ENCODE measurements at regions of chr22 and their contacts with region 1.

Region 1: DNA sequence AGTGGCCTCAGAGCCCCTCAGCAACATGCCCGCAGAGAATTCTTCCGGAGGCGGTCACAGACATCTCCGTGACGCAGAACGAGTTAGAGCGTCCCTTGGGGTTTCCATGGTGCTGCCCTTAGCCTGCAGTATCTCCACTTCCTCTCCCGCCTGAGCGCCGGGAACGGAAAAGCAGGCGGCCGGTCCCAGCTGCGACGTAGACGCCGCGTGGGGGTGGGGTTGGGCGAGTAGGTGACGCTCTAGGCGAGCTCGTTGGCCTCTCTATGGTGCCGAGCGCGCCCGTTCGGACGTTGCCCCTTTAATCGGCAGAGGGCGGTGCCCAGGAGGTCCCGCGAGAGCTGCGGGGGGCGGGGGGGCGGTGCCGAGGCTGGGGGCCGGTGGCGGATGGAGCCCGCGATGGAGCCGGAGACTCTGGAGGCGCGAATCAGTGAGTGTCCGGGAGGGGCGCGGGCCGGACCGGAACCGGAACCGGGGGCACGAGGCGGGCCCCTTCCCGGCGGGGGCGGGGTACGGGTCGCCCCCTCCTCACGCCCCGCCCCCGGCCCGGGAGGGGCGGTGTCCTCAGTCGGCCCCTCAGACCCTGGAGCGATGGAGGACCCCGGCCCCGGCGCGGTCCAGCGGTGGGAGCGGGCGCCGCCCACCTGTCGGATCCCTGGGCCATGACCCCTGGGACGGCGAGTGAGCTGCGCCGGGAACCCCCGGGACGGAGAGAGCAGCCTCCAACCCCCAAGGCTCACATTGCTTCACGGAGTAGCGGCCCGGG is at the start of gene GGA1:
- DNase-seq: peak; percentile 95 to 96
- H3K4me3 ChIP-seq: peak within 1 kb of the TSS; percentile 60
- H3K27ac ChIP-seq: peak within 1 kb of the TSS; percentile 99
- H3K4me1 ChIP-seq: peaks cover 43% of the 10 kb centered on the region
- H3K27me3 ChIP-seq: no peaks in the 10 kb centered on the region
- CTCF ChIP-seq: no peak
- total RNA-seq, gene GGA1: 99.2 and 102 TPM in 2 replicates

Region 2: GRCh38 chr22:37316875-37317371 is 291.7 kb before region 1 on chr22:
- CTCF ChIA-PET with region 1: interaction called, 18 read pairs
- POLR2A ChIA-PET with region 1: no interaction called
- intact Hi-C with region 1: no loop called
- DNase-seq: peak; percentile 90
- H3K4me3 ChIP-seq: no peak overlapping the region
- H3K27ac ChIP-seq: no peak overlapping the region
- H3K4me1 ChIP-seq: peaks cover 51% of the 10 kb centered on the region
- H3K27me3 ChIP-seq: no peaks in the 10 kb centered on the region
- CTCF ChIP-seq: peak; percentile 99

Region 3: GRCh38 chr22:37588546-37589215 is 20.0 kb before region 1 on chr22:
- CTCF ChIA-PET with region 1: interaction called, 15 read pairs
- POLR2A ChIA-PET with region 1: interaction called, 47 read pairs
- intact Hi-C with region 1: no loop called
- DNase-seq: peak in 1 of 2 experiments; percentile 66
- H3K4me3 ChIP-seq: no peak overlapping the region
- H3K27ac ChIP-seq: no peak overlapping the region
- H3K4me1 ChIP-seq: peaks cover 5% of the 10 kb centered on the region; the same call in 1 of the 2 replicates
- H3K27me3 ChIP-seq: no peaks in the 10 kb centered on the region
- CTCF ChIP-seq: no peak

Region 4: DNA sequence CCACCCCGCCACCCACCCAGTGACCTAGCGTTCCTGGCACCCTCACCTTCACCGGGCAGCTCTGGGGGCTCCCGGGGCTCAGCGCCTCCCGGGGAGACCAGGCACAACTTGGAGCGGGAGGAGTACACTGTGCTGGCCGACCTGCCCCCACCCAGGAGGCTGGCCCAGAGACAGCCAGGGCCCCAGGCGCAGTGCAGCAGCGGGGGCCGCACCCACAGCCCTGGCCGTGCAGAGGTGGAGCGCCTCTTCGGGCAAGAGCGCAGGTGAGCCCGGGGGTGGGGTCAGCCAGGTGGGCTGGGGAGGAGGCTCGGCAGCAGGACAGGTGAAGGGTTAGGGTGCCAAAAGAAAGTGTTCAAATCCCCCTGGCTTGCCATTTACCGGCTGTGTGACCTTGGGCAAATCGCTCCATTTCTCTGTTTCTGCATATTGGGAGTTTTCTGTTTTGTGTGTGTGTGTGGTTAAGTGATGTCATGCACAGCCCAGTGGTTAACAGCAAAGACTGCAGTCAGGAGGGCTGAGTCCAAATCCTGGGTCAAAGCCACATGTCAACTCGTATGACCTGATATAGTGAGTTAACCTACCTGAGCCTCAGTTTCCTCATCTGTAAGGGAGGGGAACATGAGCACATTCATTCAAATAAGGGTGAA is 117.7 kb after region 1 on chr22:
- CTCF ChIA-PET with region 1: interaction called, 12 read pairs
- POLR2A ChIA-PET with region 1: no interaction called
- intact Hi-C with region 1: no loop called
- DNase-seq: no peak
- H3K4me3 ChIP-seq: no peak overlapping the region
- H3K27ac ChIP-seq: no peak overlapping the region
- H3K4me1 ChIP-seq: peaks cover 12% of the 10 kb centered on the region; the same call in 1 of the 2 replicates
- H3K27me3 ChIP-seq: no peaks in the 10 kb centered on the region
- CTCF ChIP-seq: no peak; the same call in 1 of the 2 replicates

Region 5: GRCh38 chr22:37792494-37792893 is 183.8 kb after region 1 on chr22:
- CTCF ChIA-PET with region 1: no interaction called
- POLR2A ChIA-PET with region 1: interaction called, 10 read pairs
- intact Hi-C with region 1: no loop called
- DNase-seq: peak in 1 of 2 experiments; percentile 55
- H3K4me3 ChIP-seq: no peak overlapping the region
- H3K27ac ChIP-seq: no peak overlapping the region
- H3K4me1 ChIP-seq: peaks cover 21% of the 10 kb centered on the region
- H3K27me3 ChIP-seq: no peaks in the 10 kb centered on the region
- CTCF ChIP-seq: no peak

Region 6: GRCh38 chr22:37849089-37849751 is 240.6 kb after region 1 on chr22 and contains the start of gene EIF3L:
- CTCF ChIA-PET with region 1: interaction called, 3 read pairs
- POLR2A ChIA-PET with region 1: no interaction called
- intact Hi-C with region 1: loop called (anchors 2 kb)
- DNase-seq: peak; percentile 91 to 92
- H3K4me3 ChIP-seq: peak within 1 kb of the TSS; percentile 89
- H3K27ac ChIP-seq: peak within 1 kb of the TSS; percentile 94
- H3K4me1 ChIP-seq: peaks cover 21% of the 10 kb centered on the region
- H3K27me3 ChIP-seq: no peaks in the 10 kb centered on the region
- CTCF ChIP-seq: no peak
- total RNA-seq, gene EIF3L: 566 and 582 TPM in 2 replicates

Region 7: GRCh38 chr22:37965940-37966664 is 357.4 kb after region 1 on chr22:
- CTCF ChIA-PET with region 1: interaction called, 3 read pairs
- POLR2A ChIA-PET with region 1: no interaction called
- intact Hi-C with region 1: loop called (anchors 10 kb)
- DNase-seq: no peak
- H3K4me3 ChIP-seq: no peak overlapping the region
- H3K27ac ChIP-seq: no peak overlapping the region
- H3K4me1 ChIP-seq: no peaks in the 10 kb centered on the region
- H3K27me3 ChIP-seq: no peaks in the 10 kb centered on the region
- CTCF ChIP-seq: no peak

Region 8: GRCh38 chr22:38490915-38491314 is 882.3 kb after region 1 on chr22:
- CTCF ChIA-PET with region 1: no interaction called
- POLR2A ChIA-PET with region 1: no interaction called
- intact Hi-C with region 1: no loop called
- DNase-seq: peak in 1 of 2 experiments; percentile 31
- H3K4me3 ChIP-seq: no peak overlapping the region
- H3K27ac ChIP-seq: peak overlapping the region; percentile 15; the same call in 1 of the 2 replicates
- H3K4me1 ChIP-seq: no peaks in the 10 kb centered on the region
- H3K27me3 ChIP-seq: no peaks in the 10 kb centered on the region
- CTCF ChIP-seq: no peak